Calu3 (cell line): ENCODE measurements at regions of chr1 and their contacts with region 1.

Region 1: DNA sequence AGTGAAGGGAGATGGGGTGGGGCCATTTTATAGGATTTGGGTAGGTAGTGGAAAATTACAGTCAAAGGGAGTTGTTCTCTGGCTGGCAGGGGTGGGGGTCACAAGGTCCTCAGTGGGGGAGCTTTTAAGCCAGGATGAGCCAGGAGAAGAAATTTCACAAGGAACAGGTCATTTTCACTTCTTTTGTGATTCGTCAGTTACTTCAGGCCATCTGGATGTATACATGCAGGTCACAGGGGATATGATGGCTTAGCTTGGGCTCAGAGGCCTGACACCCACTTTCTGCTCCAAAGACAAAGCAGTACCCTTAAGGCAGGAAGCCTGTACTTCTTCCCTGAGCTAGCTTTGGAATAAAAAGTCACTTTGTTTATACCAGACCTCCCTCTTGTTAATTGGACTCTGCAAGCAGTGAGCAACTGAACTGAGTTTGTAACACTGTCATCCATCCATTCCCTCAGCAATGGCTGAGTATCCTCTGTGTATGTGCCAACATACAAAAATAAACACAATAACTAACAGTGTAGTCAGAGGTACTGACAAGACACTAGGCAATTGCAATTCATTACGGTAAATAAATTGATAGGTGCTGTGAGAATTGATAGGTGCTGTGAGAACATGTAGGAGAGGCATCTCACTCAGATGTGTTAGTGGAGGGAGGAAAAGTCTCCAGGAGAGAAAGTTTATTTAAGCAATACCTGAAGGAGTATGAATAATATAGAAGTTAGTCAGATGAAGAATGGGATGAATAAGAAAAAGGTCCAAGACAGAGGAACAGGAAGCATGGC is 14.7 kb upstream of the RGS2 start:
- DNase-seq: no peak
- H3K4me3 Mint-ChIP-seq: no peak overlapping the region
- H3K27ac Mint-ChIP-seq: no peak overlapping the region
- H3K4me1 Mint-ChIP-seq: peaks cover 18% of the 10 kb centered on the region
- H3K27me3 Mint-ChIP-seq: no peaks in the 10 kb centered on the region
- CTCF ChIP-seq: no peak

Region 2: GRCh38 chr1:192633533-192634253 is 160.5 kb before region 1 on chr1:
- CTCF ChIA-PET with region 1: no interaction called
- intact Hi-C with region 1: loop called (anchors 5 kb)
- DNase-seq: no peak
- H3K4me3 Mint-ChIP-seq: no peak overlapping the region
- H3K27ac Mint-ChIP-seq: no peak overlapping the region
- H3K4me1 Mint-ChIP-seq: peaks cover 35% of the 10 kb centered on the region
- H3K27me3 Mint-ChIP-seq: no peaks in the 10 kb centered on the region
- CTCF ChIP-seq: no peak

Region 3: GRCh38 chr1:192826791-192827477 is 32.8 kb after region 1 on chr1:
- CTCF ChIA-PET with region 1: no interaction called
- intact Hi-C with region 1: no loop called
- DNase-seq: peak; percentile 44
- H3K4me3 Mint-ChIP-seq: peak overlapping the region; percentile 19
- H3K27ac Mint-ChIP-seq: peak overlapping the region; percentile 31
- H3K4me1 Mint-ChIP-seq: peaks cover 38% of the 10 kb centered on the region
- H3K27me3 Mint-ChIP-seq: no peaks in the 10 kb centered on the region
- CTCF ChIP-seq: no peak

Region 4: DNA sequence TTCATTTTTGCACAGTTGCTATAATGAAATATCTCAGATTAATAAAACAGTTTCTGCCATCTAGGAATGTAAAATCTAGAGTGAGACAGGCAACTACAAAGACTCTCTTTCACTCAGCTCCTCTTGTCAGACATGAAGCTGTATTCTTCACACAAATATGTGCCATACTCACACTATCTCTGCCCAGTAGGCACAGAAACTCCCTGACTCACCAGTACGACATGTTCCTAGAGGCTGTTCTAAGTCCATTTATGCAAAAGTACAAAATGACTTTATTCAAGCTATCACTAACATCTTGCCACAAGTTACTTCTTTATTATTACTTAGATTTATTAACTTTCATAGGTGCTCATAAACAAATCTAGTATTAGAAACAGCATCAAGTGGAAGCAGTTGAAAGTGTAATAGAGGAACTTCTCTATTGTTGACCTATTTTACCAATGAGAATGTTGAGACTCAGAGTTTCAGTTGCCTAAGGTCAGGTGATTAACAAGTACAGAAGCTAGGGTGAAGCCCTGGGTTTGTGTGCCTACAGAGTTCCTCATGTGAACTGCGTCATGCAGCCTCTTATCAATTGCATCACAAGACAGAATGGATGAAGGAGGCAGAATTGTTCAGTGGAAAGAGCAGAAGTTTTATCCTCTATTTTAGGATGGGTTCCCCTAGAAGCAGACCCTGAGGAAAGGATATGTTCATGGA is 113.5 kb after region 1 on chr1:
- CTCF ChIA-PET with region 1: no interaction called
- intact Hi-C with region 1: no loop called
- DNase-seq: no peak
- H3K4me3 Mint-ChIP-seq: no peak overlapping the region
- H3K27ac Mint-ChIP-seq: no peak overlapping the region
- H3K4me1 Mint-ChIP-seq: peaks cover 6% of the 10 kb centered on the region
- H3K27me3 Mint-ChIP-seq: no peaks in the 10 kb centered on the region
- CTCF ChIP-seq: no peak

Region 5: DNA sequence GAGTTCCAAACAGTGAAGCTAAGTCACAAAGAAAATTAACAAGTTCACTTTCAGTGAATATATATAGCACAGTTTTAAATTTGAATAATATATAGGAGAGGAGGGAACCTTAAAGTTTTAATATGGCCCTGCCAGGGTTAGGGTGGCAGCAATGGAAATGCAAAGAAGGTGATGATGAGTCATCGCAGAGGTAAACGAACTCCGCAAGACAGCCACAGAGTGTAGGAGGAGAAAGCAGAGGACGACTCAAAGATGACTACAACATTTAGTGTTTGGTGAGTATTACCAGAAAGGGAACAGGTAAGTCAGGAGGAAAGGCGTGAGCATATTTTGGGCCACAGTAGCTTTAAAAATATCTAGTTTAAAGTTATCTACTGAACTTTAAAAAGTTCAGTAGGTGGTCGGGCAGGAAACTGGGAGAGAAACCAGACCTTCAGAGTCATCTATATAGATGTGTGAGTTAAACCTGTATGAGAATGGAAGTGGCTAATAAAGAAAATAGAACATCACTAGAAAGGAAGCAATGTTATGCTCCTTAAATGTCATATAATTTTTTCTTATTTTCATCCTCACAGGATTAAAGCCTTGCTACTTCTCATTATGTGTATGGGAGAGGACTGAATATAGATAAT is 189.3 kb after region 1 on chr1:
- CTCF ChIA-PET with region 1: no interaction called
- intact Hi-C with region 1: no loop called
- DNase-seq: no peak
- H3K4me3 Mint-ChIP-seq: no peak overlapping the region
- H3K27ac Mint-ChIP-seq: no peak overlapping the region
- H3K4me1 Mint-ChIP-seq: peaks cover 26% of the 10 kb centered on the region
- H3K27me3 Mint-ChIP-seq: no peaks in the 10 kb centered on the region
- CTCF ChIP-seq: no peak